ENCODE measurements at regions of chr9 and their contacts with region 1.

Region 1: DNA sequence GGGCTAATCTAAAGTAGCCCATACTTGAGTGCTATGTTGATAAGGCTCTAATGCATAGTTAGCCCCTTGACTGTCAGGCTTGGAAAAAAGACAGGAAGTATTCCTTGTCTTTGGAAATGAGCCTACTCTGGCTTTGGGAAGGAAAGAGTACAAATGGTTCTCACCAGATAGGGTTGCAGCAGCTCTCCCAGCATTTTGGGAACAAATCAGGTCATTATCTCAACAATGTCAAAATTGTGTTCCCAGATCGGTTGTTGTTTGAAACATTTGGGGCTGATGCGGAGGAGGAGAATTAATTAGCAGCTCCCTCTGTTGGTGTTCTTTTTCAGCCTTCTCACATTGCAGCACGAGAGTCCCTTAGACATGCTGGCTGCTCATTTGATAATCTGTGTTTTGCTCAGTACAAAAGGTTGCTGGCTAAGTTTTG is 294.7 kb upstream of the DMRT1 start:
- DNase-seq: peak in 1 of 3 donors; percentile 44
- ATAC-seq: peak; percentile 83 to 84
- H3K4me3 ChIP-seq: peak overlapping the region; percentile 13
- H3K27ac ChIP-seq: peak overlapping the region; percentile 91
- H3K4me1 ChIP-seq: peaks cover 18% of the 10 kb centered on the region
- H3K27me3 ChIP-seq: no peaks in the 10 kb centered on the region

Region 2: DNA sequence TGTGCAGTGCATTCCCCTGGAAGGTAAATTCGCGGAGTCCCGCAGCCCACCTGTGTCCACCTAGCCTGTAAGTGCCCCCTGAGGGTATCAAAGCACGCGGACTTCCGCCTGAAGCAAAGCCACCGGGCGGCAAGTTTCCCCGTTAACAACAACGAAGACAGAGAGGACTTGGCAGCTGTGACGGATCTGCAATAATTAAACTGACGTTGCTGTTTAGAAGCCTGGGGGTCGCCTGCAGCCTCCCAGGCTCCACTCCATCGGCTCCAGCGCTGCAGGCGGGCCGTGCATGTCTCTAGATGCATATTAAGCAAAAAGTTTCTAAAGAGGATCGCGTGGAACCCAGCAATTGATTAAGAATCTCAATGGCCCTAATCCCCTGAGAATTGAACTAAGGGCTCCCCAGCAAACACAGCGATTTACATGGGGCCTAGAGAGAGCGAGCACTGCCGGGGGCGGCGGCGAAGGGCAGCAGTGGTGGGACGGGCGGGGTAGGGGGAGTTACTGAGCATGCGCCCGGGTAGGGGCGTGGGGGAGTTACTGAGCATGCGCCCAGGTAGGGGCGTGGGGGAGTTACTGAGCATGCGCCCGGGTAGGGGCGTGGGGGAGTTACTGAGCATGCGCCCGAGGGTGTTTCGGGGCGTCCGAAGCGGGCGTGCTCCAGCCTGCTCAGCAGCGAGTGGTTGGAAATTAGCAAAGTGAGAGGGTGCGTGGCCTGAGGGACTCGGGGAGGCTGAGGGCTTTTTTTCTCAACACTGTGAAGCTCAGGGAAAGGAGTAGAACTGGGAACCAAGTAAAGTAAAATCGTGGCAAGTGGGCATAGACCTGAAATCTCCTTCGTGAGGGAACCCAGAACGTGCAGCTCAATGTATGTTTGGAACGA is 76.9 kb before region 1 on chr9:
- intact Hi-C with region 1: loop called in 1 of 4 experiments (anchors 10 kb)
- DNase-seq: peak; percentile 91 to 96 (median 93)
- ATAC-seq: peak; percentile 97 to 98
- H3K4me3 ChIP-seq: peak overlapping the region; percentile 68
- H3K27ac ChIP-seq: peak overlapping the region; percentile 92
- H3K4me1 ChIP-seq: peaks cover 2% of the 10 kb centered on the region
- H3K27me3 ChIP-seq: no peaks in the 10 kb centered on the region

Region 3: DNA sequence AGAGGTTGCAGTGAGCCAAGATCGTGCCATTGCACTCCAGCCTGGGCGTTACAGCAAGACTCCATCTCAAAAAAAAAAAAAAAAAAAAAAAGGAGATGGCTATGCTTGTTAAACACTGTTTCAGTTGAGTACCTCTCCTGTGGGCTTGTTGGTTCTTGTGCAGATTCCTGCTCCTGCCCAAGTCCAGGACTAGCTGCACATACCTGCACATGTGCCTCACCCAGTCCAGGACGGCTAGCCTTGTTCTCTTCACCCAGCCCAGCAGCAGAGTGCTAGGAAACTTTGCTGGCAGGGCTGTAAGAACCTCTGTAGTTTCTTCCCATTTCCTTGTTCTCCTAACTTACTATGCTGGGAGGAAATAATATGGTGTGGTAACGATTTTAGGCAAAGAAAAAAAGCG is 60.6 kb after region 1 on chr9:
- intact Hi-C with region 1: no loop called
- DNase-seq: no peak
- ATAC-seq: no peak
- H3K4me3 ChIP-seq: no peak overlapping the region
- H3K27ac ChIP-seq: no peak overlapping the region
- H3K4me1 ChIP-seq: no peaks in the 10 kb centered on the region
- H3K27me3 ChIP-seq: no peaks in the 10 kb centered on the region

Region 4: GRCh38 chr9:928362-929042 is 381.7 kb after region 1 on chr9:
- intact Hi-C with region 1: no loop called
- DNase-seq: no peak
- ATAC-seq: no peak
- H3K4me3 ChIP-seq: no peak overlapping the region
- H3K27ac ChIP-seq: no peak overlapping the region
- H3K4me1 ChIP-seq: no peaks in the 10 kb centered on the region
- H3K27me3 ChIP-seq: no peaks in the 10 kb centered on the region

Region 5: DNA sequence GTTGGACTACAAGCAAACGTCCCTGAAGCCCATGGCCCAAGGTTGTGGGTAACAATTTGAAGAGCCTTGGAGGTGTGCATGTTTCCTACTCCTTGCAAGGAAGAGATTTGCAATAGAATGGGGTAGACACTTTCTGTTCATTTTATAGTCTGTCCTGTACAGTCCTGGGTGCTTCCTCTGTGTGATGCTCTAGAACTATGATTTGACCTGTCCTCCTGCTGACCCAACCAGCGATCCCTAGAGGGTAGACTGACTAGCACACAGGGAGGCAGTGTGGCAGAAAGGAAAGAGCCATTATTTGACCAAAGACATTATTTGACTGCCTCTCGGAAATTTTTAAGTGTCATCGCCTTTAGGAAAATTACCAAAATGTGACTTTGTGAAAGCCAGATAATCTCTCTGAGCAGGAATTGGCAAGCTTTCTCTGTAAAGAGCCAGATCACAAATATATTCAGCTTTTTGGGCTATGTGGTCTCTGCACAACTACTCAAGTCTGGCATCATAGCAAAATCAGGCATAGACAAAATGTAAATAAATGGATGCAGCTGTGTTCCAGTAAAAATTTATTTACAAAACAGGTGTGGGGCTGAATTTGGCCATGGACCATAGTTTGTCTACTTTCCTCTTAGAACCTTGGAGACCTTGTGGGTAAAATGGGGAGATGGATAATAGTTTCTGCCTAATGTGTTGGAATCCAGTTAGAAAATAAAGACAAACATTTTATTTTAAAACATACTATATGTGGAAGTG is 610.2 kb after region 1 on chr9:
- intact Hi-C with region 1: no loop called
- DNase-seq: no peak
- ATAC-seq: no peak
- H3K4me3 ChIP-seq: no peak overlapping the region
- H3K27ac ChIP-seq: no peak overlapping the region
- H3K4me1 ChIP-seq: no peaks in the 10 kb centered on the region
- H3K27me3 ChIP-seq: no peaks in the 10 kb centered on the region

Measured in right cardiac atrium (tissue), 5 donors.